IMR-90 (cell line): ENCODE measurements at regions of chrX and their contacts with region 1.

Region 1: DNA sequence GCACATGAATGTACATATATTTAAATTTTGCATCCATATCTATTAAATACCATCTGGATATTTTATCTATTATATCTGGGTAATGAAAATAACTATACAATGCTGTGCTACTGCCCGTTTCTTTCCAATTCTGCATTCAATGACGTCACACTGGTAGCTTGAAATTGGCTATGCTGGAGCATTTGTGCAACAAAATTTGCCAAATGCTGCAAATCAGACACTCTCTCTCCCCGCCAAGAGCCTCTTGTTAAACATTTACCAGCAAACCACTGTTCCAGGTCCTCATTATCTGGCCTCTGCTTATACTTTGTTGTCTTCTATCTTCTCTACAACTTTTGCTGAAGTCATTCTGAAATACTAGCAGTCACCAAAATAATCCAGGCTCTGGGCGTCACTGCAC is 938.4 kb upstream of the FTHL17 start:
- DNase-seq: no peak
- ATAC-seq: no peak
- H3K4me3 ChIP-seq: no peak overlapping the region
- H3K27ac ChIP-seq: no peak overlapping the region
- H3K4me1 ChIP-seq: no peaks in the 10 kb centered on the region
- H3K27me3 ChIP-seq: no peaks in the 10 kb centered on the region
- CTCF ChIP-seq: no peak
- POLR2A ChIP-seq: no peak
- RAD21 ChIP-seq: no peak

Region 2: GRCh38 chrX:31483336-31483735 is 526.9 kb before region 1 on chrX:
- CTCF ChIA-PET with region 1: no interaction called
- POLR2A ChIA-PET with region 1: no interaction called
- dilution Hi-C with region 1: no loop called
- in situ Hi-C with region 1: no loop called
- intact Hi-C with region 1: no loop called
- DNase-seq: peak; percentile 79
- ATAC-seq: no peak; the same call in 1 of the 2 replicates
- H3K4me3 ChIP-seq: no peak overlapping the region
- H3K27ac ChIP-seq: no peak overlapping the region
- H3K4me1 ChIP-seq: no peaks in the 10 kb centered on the region
- H3K27me3 ChIP-seq: no peaks in the 10 kb centered on the region
- CTCF ChIP-seq: no peak
- POLR2A ChIP-seq: no peak
- RAD21 ChIP-seq: no peak

Region 3: GRCh38 chrX:32041181-32041580 is 31.0 kb after region 1 on chrX:
- CTCF ChIA-PET with region 1: no interaction called
- POLR2A ChIA-PET with region 1: no interaction called
- dilution Hi-C with region 1: no loop called
- in situ Hi-C with region 1: no loop called
- intact Hi-C with region 1: loop called (anchors 1 kb)
- DNase-seq: no peak
- ATAC-seq: no peak
- H3K4me3 ChIP-seq: no peak overlapping the region
- H3K27ac ChIP-seq: no peak overlapping the region
- H3K4me1 ChIP-seq: no peaks in the 10 kb centered on the region
- H3K27me3 ChIP-seq: no peaks in the 10 kb centered on the region
- CTCF ChIP-seq: no peak
- POLR2A ChIP-seq: no peak
- RAD21 ChIP-seq: no peak